Stomach (tissue), 19 donors: ENCODE measurements at regions of chr3 and their contacts with region 1.

Region 1: GRCh38 chr3:111967651-111968274 is 11.1 kb upstream of the ABHD10 start:
- DNase-seq: peak; percentile 87 to 93
- H3K4me3 ChIP-seq: no peak overlapping the region
- H3K27ac ChIP-seq: peak overlapping the region in 4 of 5 donors; percentile 20 to 64 (median 36)
- H3K4me1 ChIP-seq: peaks cover 0 to 25% (median 13%) of the 10 kb centered on the region in 4 donors
- H3K27me3 ChIP-seq: no peaks in the 10 kb centered on the region
- CTCF ChIP-seq: peak in 6 of 7 experiments; percentile 55 to 93 (median 84)
- EP300 ChIP-seq: no peak
- POLR2A ChIP-seq: no peak

Region 2: GRCh38 chr3:111260878-111261277 is 706.9 kb before region 1 on chr3:
- intact Hi-C with region 1: no loop called
- DNase-seq: no peak
- H3K4me3 ChIP-seq: no peak overlapping the region
- H3K27ac ChIP-seq: no peak overlapping the region
- H3K4me1 ChIP-seq: no peaks in the 10 kb centered on the region
- H3K27me3 ChIP-seq: no peaks in the 10 kb centered on the region
- CTCF ChIP-seq: no peak
- EP300 ChIP-seq: no peak
- POLR2A ChIP-seq: no peak

Region 3: DNA sequence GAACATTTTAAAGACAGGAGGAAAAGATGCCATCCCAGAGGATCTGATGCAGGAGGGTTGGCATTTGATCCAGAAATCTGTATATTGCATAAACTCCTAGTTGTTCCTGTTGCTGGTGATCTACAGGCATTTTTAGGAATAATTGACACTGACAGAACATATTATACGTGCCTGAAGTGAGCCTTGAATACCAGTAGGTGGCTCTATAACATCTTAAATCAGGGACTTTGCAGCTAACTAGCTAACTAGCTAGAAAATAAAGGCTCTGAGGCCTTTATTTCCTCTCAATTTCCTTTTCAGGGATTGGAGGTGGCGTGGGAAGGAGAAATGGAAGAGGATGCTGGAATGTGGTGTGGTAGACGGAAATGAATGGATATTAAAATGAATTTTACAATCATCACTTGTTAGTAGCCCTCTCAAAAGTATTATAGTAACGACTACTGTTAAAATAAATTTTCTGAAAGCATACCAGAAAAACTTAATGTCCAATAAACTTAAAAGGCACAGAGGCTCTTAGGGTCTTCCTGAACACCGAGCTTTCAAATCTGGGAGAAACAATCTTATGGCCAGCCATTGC is 298.8 kb before region 1 on chr3:
- intact Hi-C with region 1: loop called (anchors 5 kb)
- DNase-seq: peak in 1 of 2 donors; percentile 76
- H3K4me3 ChIP-seq: no peak overlapping the region
- H3K27ac ChIP-seq: no peak overlapping the region
- H3K4me1 ChIP-seq: peaks cover 0 to 28% (median 8%) of the 10 kb centered on the region in 4 donors
- H3K27me3 ChIP-seq: no peaks in the 10 kb centered on the region
- CTCF ChIP-seq: peak in 5 of 7 experiments; percentile 63 to 85 (median 79)
- EP300 ChIP-seq: no peak
- POLR2A ChIP-seq: no peak

Region 4: DNA sequence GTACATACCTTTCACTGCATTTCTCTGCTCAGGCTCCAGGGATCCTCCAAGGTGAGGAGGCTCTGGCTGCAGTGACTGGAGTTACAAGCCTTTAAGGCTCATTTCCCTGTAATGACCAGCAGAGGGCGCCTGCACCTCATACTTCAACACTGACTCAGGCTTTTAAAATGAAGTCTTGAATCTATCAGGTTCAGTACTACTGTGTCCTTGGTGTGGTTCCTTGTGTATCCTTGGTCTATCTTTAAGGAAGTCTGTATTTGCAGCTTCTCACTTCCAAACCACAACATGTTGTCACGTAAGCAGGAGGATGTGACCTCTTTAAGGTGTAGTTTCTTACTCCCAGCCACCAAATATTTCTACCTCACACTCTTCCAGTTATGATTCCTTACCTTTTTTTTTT is 250.2 kb before region 1 on chr3:
- intact Hi-C with region 1: loop called (anchors 5 kb)
- DNase-seq: peak; percentile 86 to 94
- H3K4me3 ChIP-seq: no peak overlapping the region
- H3K27ac ChIP-seq: no peak overlapping the region
- H3K4me1 ChIP-seq: peaks cover 0 to 6% (median 4%) of the 10 kb centered on the region in 4 donors
- H3K27me3 ChIP-seq: no peaks in the 10 kb centered on the region
- CTCF ChIP-seq: peak in 6 of 7 experiments; percentile 59 to 99 (median 94)
- EP300 ChIP-seq: no peak
- POLR2A ChIP-seq: no peak

Region 5: GRCh38 chr3:111859974-111860859 is 107.5 kb before region 1 on chr3:
- intact Hi-C with region 1: loop called (anchors 10 kb)
- DNase-seq: peak; percentile 75 to 94
- H3K4me3 ChIP-seq: peak overlapping the region; percentile 57 to 85 (median 80)
- H3K27ac ChIP-seq: peak overlapping the region; percentile 83 to 97 (median 91)
- H3K4me1 ChIP-seq: peaks cover 10 to 66% (median 49%) of the 10 kb centered on the region in 4 donors
- H3K27me3 ChIP-seq: no peaks in the 10 kb centered on the region
- CTCF ChIP-seq: peak in 5 of 7 experiments; percentile 19 to 61 (median 37)
- EP300 ChIP-seq: no peak
- POLR2A ChIP-seq: peak in 1 of 4 donors; percentile 25